Posterior vena cava (tissue), 2 donors: ENCODE measurements at regions of chr9 and their contacts with region 1.

Region 1: GRCh38 chr9:98357921-98358535 is 102.6 kb upstream of the TBC1D2 start:
- DNase-seq: no peak

Region 2: DNA sequence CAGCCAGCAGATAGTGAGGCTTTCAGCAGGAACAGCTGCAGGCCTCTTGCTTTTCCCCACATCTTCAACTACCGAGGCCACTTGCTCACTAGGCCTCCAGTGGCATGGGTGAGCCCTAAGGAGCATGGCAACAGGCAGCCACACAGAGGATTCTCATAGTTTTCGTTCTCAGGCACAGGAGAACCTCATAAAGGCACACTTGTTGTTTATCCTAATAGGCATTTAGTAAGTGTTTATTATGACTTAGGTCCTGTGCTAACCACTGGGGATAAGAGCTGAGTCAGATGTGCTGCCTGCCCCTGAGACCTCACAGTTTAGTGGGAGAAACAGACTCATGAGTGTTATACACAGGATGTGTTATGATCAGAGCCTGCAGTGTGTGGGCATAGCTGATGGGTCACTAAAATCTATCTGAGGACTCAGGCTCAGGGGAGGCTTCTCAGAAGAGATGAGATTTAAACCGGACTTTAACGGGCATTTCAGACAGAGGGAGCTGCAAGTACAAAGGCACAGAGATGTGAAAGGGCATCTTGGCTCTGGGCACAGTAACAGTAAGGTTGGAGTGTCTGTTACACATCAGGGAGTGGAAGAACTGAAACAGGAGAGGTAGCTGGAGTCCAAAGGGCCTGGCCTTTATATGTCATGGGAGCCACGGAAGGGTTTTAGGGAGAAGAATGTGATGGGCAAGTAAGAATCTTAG is 399.1 kb before region 1 on chr9:
- intact Hi-C with region 1: loop called in 1 of 2 experiments (anchors 5 kb)
- DNase-seq: no peak